Adrenal gland (tissue), 19 donors: ENCODE measurements at regions of chr3 and their contacts with region 1.

Region 1: DNA sequence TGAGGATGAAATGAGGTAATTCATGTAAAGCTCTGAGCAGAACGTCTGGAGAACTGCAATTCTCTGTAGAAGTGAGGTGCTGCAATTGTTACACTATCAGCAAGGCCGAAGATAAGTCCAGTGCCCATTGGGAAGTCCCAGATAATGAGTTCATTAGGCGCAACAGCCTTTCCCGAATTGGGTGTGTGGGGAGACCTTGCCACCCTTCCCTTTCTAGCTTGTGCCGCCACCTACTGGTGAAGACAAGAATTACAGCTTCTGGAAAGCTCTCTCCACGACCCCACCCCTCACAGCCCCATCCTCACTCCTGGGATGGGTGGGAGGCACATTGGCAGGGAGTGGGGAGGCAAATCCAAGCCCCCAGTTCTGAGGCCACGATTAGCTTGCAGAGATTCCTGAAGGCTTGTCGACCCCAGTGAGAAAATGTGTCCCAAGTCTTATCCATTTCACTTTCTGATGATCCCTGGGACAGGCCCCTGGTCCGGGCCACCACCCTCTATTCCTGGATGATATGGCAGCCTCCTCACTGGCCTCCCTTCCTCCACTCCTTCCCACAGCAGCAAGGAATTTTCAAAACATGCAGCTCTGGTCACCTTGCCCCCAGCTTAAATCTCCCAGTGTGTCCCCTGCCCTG is 36.4 kb downstream of the FAM3D start:
- DNase-seq: peak; percentile 55 to 83 (median 75)
- H3K4me3 ChIP-seq: no peak overlapping the region
- H3K27ac ChIP-seq: peak overlapping the region in 2 of 5 donors; percentile 60 to 83
- H3K4me1 ChIP-seq: peaks cover 15 to 33% of the 10 kb centered on the region in 2 donors
- H3K27me3 ChIP-seq: no peaks in the 10 kb centered on the region
- CTCF ChIP-seq: peak; percentile 88 to 96 (median 93)
- POLR2A ChIP-seq: no peak

Region 2: GRCh38 chr3:58324391-58325390 is 305.5 kb before region 1 on chr3:
- intact Hi-C with region 1: loop called in 1 of 2 experiments (anchors 10 kb)
- DNase-seq: no peak
- H3K4me3 ChIP-seq: no peak overlapping the region
- H3K27ac ChIP-seq: peak overlapping the region in 4 of 5 donors; percentile 13 to 77 (median 46)
- H3K4me1 ChIP-seq: peaks cover 17 to 32% of the 10 kb centered on the region in 2 donors
- H3K27me3 ChIP-seq: no peaks in the 10 kb centered on the region
- CTCF ChIP-seq: no peak
- POLR2A ChIP-seq: no peak

Region 3: DNA sequence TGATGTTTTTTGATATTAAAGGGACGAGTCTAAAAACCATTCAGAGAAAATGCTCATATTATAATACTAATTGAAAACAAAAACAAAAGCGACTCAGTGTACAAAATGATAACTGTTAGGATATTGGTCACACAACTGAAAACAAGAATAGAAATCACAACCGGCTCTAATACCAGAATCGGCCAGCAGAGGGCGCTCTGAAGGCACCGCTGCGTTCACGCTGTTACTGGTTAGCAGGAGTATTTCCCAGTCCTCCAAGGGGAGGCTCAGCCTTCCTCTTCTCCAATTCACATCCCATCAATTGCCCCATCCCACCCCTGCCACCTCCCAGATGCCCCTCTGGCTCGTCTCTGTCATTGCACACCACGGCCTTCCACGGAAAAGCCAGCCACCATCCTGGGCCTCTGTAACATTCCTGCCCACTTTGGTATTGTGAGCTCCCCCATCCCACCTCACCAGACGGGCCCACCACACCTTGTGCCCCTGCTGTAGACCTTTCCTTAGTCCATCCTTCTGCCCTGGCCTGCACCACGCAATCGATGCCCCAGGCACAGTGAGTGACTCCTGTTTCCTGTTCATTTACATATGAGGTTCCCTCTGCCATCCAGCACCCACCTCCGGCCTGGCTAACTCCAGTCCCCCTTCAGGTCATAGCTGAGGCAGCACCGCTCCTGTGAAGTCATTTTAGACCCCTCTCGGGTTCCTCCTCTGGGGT is 61.5 kb before region 1 on chr3:
- intact Hi-C with region 1: loop called (anchors 1 to 2 kb)
- DNase-seq: peak; percentile 64 to 94 (median 79)
- H3K4me3 ChIP-seq: no peak overlapping the region
- H3K27ac ChIP-seq: no peak overlapping the region
- H3K4me1 ChIP-seq: no peaks in the 10 kb centered on the region
- H3K27me3 ChIP-seq: no peaks in the 10 kb centered on the region
- CTCF ChIP-seq: peak; percentile 79 to 97 (median 92)
- POLR2A ChIP-seq: no peak

Region 4: GRCh38 chr3:59049671-59050331 is 419.6 kb after region 1 on chr3 and contains the start of gene CFAP20DC:
- intact Hi-C with region 1: loop called in 1 of 2 experiments (anchors 10 kb)
- DNase-seq: peak; percentile 91 to 97 (median 93)
- H3K4me3 ChIP-seq: peak within 1 kb of the TSS in 3 of 4 donors; percentile 61 to 91 (median 68)
- H3K27ac ChIP-seq: peak within 1 kb of the TSS in 3 of 5 donors; percentile 15 to 70 (median 41)
- H3K4me1 ChIP-seq: peaks cover 0 to 7% of the 10 kb centered on the region in 2 donors
- H3K27me3 ChIP-seq: no peaks in the 10 kb centered on the region
- CTCF ChIP-seq: no peak
- POLR2A ChIP-seq: peak; percentile 65 to 80
- total RNA-seq, gene CFAP20DC: 0.35 to 6.0 (median 2.6) TPM